Mammary epithelial cell (primary cell): ENCODE measurements at regions of chr13 and their contacts with region 1.

Region 1: GRCh38 chr13:89900104-89900765 is 1447.3 kb upstream of the MIR17HG start:
- DNase-seq: peak; percentile 56
- H3K4me3 ChIP-seq: no peak overlapping the region
- H3K27ac ChIP-seq: no peak overlapping the region
- H3K4me1 ChIP-seq: no peaks in the 10 kb centered on the region
- H3K27me3 ChIP-seq: no peaks in the 10 kb centered on the region
- CTCF ChIP-seq: no peak

Region 2: GRCh38 chr13:89375839-89376238 is 524.4 kb before region 1 on chr13:
- CTCF ChIA-PET with region 1: interaction called, 14 read pairs
- dilution Hi-C with region 1: no loop called
- in situ Hi-C with region 1: no loop called
- intact Hi-C with region 1: no loop called
- DNase-seq: peak; percentile 32
- H3K4me3 ChIP-seq: no peak overlapping the region
- H3K27ac ChIP-seq: no peak overlapping the region
- H3K4me1 ChIP-seq: peaks cover 10% of the 10 kb centered on the region
- H3K27me3 ChIP-seq: no peaks in the 10 kb centered on the region
- CTCF ChIP-seq: no peak

Region 3: GRCh38 chr13:89923736-89924135 is 23.5 kb after region 1 on chr13:
- CTCF ChIA-PET with region 1: no interaction called
- dilution Hi-C with region 1: no loop called
- in situ Hi-C with region 1: no loop called
- intact Hi-C with region 1: no loop called
- DNase-seq: peak; percentile 64
- H3K4me3 ChIP-seq: no peak overlapping the region
- H3K27ac ChIP-seq: no peak overlapping the region
- H3K4me1 ChIP-seq: peaks cover 6% of the 10 kb centered on the region
- H3K27me3 ChIP-seq: no peaks in the 10 kb centered on the region
- CTCF ChIP-seq: no peak